GM10248 (cell line): ENCODE measurements at regions of chr5 and their contacts with region 1.

Region 1: GRCh38 chr5:72366324-72366976 is 46.3 kb downstream of the PTCD2 start:
- DNase-seq: peak; percentile 49
- CTCF ChIP-seq: peak; percentile 71

Region 2: GRCh38 chr5:71922584-71923106 is 443.8 kb before region 1 on chr5:
- CTCF ChIA-PET with region 1: no interaction called
- POLR2A ChIA-PET with region 1: no interaction called
- DNase-seq: no peak
- CTCF ChIP-seq: no peak

Region 3: GRCh38 chr5:71960220-71960619 is 406.2 kb before region 1 on chr5:
- CTCF ChIA-PET with region 1: no interaction called
- POLR2A ChIA-PET with region 1: no interaction called
- DNase-seq: no peak
- CTCF ChIP-seq: no peak

Region 4: DNA sequence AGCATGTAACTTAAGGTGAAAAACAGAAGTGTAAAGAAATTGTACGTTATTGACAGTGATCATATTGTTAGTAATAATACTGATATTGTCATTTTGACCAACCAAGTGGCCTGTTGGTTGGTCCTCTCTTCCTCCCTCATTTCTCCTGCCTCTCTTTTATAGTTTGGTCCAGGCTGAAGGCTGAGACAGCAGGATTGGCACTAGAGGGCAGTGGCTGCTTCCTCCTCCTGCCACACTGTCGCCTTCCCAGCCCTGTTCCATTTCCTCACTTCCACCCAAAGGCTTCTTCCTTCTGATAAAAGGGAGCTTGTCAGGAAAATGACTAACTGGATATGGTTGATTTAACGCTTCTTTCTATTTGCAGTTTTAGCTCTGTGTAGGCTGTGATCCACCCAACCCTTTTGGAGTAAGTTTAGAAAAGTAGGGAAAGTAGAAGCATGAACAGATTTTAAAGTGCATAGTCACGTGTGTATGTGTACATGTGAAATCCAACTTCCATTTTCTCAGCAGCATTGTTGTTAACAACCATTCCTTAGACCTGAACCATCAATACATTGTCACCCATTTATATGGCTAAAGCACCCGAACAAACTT is 10.6 kb before region 1 on chr5:
- CTCF ChIA-PET with region 1: interaction called, 25 read pairs
- POLR2A ChIA-PET with region 1: no interaction called
- DNase-seq: no peak
- CTCF ChIP-seq: peak; percentile 33

Region 5: DNA sequence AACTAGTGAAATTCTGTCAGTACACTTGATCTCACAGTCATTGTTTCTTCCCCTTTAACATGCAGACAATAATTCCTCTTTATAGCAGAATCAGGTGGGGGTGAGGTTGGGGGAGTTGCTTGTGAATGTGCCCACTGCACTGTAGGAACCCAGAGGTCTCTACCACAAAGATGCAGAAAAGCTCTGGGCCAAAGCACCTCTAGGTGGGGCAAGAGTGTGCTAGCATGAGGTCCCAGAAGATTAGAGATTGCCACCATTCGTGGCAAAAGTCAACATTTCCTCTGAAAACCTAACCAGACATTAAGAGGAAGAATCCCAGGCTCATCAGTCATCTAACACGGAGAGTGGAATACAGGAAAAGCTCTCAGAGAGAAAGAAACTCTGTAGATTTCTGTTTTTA is 28.2 kb after region 1 on chr5:
- CTCF ChIA-PET with region 1: interaction called, 11 read pairs
- POLR2A ChIA-PET with region 1: no interaction called
- DNase-seq: peak; percentile 53
- CTCF ChIP-seq: peak; percentile 52

Region 6: DNA sequence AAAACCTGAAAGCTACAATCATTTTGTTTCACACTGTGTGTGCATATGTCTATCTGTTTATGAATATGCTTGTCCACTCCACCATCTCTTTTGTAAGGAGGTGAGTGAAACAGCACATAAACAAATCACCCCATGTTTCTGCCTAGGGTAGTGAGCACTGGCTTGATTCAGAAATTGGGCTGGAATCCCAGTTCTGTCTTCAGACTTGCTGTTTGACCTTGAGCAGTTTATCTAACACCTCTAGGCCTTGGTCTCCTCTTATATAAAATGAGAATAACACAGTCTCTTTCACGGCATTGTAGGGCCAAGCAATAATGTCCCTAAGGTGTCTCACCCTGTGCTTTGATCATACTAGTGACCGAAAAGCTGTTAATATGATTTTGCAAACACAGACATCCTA is 79.5 kb after region 1 on chr5:
- CTCF ChIA-PET with region 1: no interaction called
- POLR2A ChIA-PET with region 1: no interaction called
- DNase-seq: no peak
- CTCF ChIP-seq: no peak

Region 7: DNA sequence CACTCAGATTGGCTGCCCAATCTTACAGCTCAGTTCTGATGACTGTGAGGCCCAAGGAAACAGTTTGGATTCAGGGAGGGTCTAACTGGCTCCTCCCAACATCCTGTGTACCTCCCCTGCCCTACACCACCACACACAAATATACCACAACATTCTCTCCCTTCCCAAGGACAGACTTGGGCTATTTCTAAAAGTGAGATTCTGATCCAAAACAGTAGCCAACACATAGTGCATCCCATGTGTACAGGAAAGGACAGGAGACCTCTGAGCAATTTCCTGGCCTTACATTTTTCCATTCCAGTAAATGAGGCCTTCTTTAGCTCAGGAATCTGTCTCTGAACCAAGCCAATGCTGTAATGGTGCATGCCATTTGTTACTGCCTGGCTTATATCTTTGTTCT is 119.9 kb after region 1 on chr5:
- CTCF ChIA-PET with region 1: interaction called, 11 read pairs
- POLR2A ChIA-PET with region 1: no interaction called
- DNase-seq: no peak
- CTCF ChIP-seq: no peak

Region 8: GRCh38 chr5:72518001-72518683 is 151.7 kb after region 1 on chr5:
- CTCF ChIA-PET with region 1: interaction called, 154 read pairs
- POLR2A ChIA-PET with region 1: no interaction called
- DNase-seq: peak; percentile 24
- CTCF ChIP-seq: no peak

Region 9: DNA sequence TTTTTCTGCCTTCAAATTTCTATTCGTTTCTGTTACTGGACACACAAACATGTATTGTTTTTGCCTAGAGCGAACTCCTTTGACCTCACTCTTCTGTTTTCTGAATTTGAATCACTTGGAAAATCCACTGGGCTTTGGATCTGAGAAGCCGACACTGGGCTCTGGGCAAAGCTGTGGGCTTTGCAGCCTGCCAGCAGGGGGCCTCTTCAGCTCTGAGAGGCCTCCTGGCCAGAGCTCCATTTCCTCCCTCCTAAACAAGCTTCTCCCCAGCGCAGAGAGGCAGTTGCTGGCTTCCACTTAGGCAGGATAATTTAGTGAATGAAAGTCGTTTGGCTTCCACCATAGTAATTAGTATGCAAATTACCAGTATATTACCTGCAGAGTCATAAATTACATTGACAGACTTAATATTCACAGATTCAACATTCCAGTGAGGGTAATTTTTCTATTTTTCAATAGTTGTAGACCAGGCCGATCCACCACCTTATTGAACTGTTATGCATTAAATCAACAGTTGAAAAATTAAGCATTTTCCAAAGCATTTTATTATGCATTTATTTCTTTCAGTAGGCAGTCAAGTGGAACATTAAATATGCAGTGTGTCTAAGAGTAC is 244.8 kb after region 1 on chr5:
- CTCF ChIA-PET with region 1: interaction called, 11 read pairs
- POLR2A ChIA-PET with region 1: no interaction called
- DNase-seq: peak; percentile 63
- CTCF ChIP-seq: peak; percentile 71